Naive thymus-derived CD4-positive, alpha-beta T cell (primary cell): ENCODE measurements at regions of chr5 and their contacts with region 1.

Region 1: DNA sequence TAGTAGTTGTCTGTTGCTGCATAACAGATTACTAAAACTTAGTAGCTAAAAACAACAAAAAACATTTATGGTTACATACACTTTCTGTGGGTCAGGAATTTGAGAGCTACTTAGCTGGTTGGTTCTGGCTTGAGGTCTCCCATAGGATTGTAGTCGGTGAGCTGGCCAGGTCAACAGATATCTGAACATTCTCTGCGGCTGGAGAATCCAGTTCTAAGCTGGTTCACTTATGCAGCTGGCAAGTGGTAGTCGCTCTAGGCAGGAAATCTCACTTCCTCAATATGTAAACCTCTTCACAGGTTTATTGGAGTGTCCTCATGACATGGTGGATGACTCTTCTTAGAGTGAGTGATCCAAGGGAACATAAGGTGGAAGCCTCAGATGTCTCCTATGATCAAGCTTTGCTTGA is 65.7 kb upstream of the TNFAIP8 start:
- DNase-seq: peak in 1 of 9 donors; percentile 39
- ATAC-seq: peak; percentile 62
- H3K4me3 ChIP-seq: peak overlapping the region; percentile 47
- H3K4me3 Mint-ChIP-seq: peak overlapping the region; percentile 63 to 97 (median 82)
- H3K27ac ChIP-seq: peak overlapping the region; percentile 82
- H3K27ac Mint-ChIP-seq: peak overlapping the region; percentile 87 to 100 (median 96)
- H3K4me1 ChIP-seq: peaks cover 65% of the 10 kb centered on the region in 2 donors
- H3K4me1 Mint-ChIP-seq: peaks cover 67 to 95% (median 84%) of the 10 kb centered on the region in 7 donors
- H3K27me3 ChIP-seq: no peaks in the 10 kb centered on the region
- H3K27me3 Mint-ChIP-seq: no peaks in the 10 kb centered on the region

Region 2: GRCh38 chr5:119274767-119275130 is 15.4 kb before region 1 on chr5:
- CTCF ChIA-PET with region 1: interaction called, 4 read pairs
- POLR2A ChIA-PET with region 1: interaction called, 227 read pairs
- intact Hi-C with region 1: loop called (anchors 1 kb)
- DNase-seq: peak in 1 of 9 donors; percentile 79
- ATAC-seq: peak; percentile 45
- H3K4me3 ChIP-seq: peak overlapping the region; percentile 52
- H3K4me3 Mint-ChIP-seq: peak overlapping the region; percentile 86 to 100 (median 98)
- H3K27ac ChIP-seq: peak overlapping the region; percentile 85
- H3K27ac Mint-ChIP-seq: peak overlapping the region; percentile 73 to 99 (median 95)
- H3K4me1 ChIP-seq: peaks cover 74 to 81% of the 10 kb centered on the region in 2 donors
- H3K4me1 Mint-ChIP-seq: peaks cover 84 to 98% (median 91%) of the 10 kb centered on the region in 7 donors
- H3K27me3 ChIP-seq: no peaks in the 10 kb centered on the region
- H3K27me3 Mint-ChIP-seq: peaks cover 0 to 2% (median 0%) of the 10 kb centered on the region in 5 donors

Region 3: GRCh38 chr5:119302916-119303897 is 13.0 kb after region 1 on chr5:
- CTCF ChIA-PET with region 1: interaction called, 9 read pairs
- POLR2A ChIA-PET with region 1: interaction called, 466 read pairs
- intact Hi-C with region 1: loop called (anchors 1 kb)
- DNase-seq: peak in 3 of 9 donors; percentile 36 to 66 (median 51)
- ATAC-seq: peak; percentile 78
- H3K4me3 ChIP-seq: peak overlapping the region; percentile 24
- H3K4me3 Mint-ChIP-seq: peak overlapping the region; percentile 63 to 93 (median 76)
- H3K27ac ChIP-seq: peak overlapping the region; percentile 74
- H3K27ac Mint-ChIP-seq: peak overlapping the region; percentile 85 to 100 (median 98)
- H3K4me1 ChIP-seq: peaks cover 81 to 82% of the 10 kb centered on the region in 2 donors
- H3K4me1 Mint-ChIP-seq: peaks cover 57 to 97% (median 94%) of the 10 kb centered on the region in 7 donors
- H3K27me3 ChIP-seq: no peaks in the 10 kb centered on the region
- H3K27me3 Mint-ChIP-seq: no peaks in the 10 kb centered on the region

Region 4: GRCh38 chr5:119678351-119679028 is 388.3 kb after region 1 on chr5:
- CTCF ChIA-PET with region 1: no interaction called
- POLR2A ChIA-PET with region 1: no interaction called
- intact Hi-C with region 1: no loop called
- DNase-seq: no peak
- ATAC-seq: no peak
- H3K4me3 ChIP-seq: no peak overlapping the region
- H3K4me3 Mint-ChIP-seq: no peak overlapping the region
- H3K27ac ChIP-seq: no peak overlapping the region
- H3K27ac Mint-ChIP-seq: no peak overlapping the region
- H3K4me1 ChIP-seq: no peaks in the 10 kb centered on the region
- H3K4me1 Mint-ChIP-seq: peaks cover 0 to 1% (median 0%) of the 10 kb centered on the region in 7 donors
- H3K27me3 ChIP-seq: no peaks in the 10 kb centered on the region
- H3K27me3 Mint-ChIP-seq: peaks cover 0 to 13% (median 0%) of the 10 kb centered on the region in 5 donors